Heart right ventricle (tissue), 16 donors: ENCODE measurements at regions of chr11 and their contacts with region 1.

Region 1: DNA sequence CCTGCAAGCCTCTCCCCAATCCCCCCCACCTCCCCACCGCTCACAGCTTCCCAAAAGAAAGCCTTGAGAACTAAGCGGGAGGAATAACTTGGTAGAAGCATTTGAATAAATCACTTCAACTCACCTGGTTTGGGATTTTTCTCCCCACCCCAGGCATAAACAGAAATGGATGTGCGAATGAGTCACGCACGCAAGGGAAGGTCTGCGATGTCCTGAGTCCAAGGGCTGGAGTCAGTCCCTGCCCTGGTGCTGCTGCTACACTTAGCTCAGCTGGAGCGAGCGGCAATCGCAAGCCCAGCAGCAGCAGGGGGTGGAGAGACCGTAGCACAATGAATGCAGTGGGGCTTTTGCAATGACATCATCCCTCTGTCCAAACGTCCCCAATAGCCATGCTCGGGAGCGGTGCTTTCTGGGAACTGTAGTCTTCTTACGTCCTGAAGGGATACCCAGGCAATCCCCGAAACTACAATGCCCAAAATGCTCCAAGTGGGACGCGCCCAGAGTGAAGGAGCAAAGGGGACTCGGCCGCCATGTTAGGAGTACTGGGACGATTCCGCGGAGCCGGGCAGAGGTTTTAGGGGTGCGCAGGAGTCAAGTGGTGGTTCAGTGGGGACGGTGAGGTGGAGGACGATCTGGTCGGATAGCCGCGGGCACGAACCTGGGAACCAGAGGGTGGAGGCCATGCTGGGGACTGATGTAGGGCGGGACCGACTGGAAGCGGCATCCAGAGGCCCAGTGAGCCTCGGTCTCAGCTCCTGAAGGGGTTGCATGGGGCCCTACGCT is at the start of gene RAB30:
- DNase-seq: peak; percentile 87 to 99
- ATAC-seq: peak; percentile 97 to 99 (median 98)
- H3K4me3 ChIP-seq: peak within 1 kb of the TSS; percentile 60 to 89 (median 74)
- H3K27ac ChIP-seq: peak within 1 kb of the TSS; percentile 71 to 95 (median 92)
- H3K4me1 ChIP-seq: peaks cover 2 to 65% (median 48%) of the 10 kb centered on the region in 9 donors
- H3K27me3 ChIP-seq: peaks cover 0 to 12% (median 0%) of the 10 kb centered on the region in 7 donors
- CTCF ChIP-seq: no peak
- total RNA-seq, gene RAB30: 20.2 to 29.4 (median 22.0) TPM

Region 2: DNA sequence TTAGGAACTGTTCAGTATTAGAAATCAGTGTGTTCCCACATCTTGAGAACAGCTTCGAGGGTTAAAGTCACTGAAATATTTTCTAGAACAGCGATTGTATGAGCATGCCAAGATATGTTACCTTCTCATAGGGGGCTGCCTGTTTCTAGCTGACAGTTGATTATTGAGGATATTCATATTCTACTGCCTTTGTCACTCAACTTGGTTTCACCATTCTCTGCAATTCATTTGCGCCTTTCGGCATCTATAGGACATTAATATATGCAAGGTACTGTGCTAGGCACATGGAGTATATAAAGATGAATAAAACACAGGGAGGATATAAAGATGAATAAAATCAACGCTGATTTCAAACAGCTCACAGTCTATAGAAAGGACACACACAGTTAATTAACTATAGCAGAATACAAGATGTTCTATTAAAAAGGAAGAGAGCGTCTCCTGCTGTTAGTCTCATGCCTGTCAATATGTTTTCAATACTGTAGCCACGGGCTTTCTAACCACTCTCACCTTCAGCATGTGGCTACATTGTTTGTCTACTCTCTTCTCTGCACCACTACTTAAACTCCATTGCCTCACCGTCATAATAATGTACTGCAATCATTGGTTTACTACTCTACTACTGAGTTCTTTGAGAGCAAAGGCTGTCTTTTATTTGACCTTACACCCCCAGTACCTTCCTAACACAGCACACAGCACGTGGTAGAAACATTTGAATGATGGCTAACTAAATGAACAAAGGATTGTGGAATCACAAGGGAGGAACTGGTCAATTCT is 81.9 kb before region 1 on chr11:
- intact Hi-C with region 1: loop called in 4 of 10 experiments (anchors 5 kb)
- DNase-seq: no peak
- ATAC-seq: no peak
- H3K4me3 ChIP-seq: no peak overlapping the region
- H3K27ac ChIP-seq: peak overlapping the region in 3 of 10 donors; percentile 10 to 54 (median 32)
- H3K4me1 ChIP-seq: peaks cover 0 to 66% (median 31%) of the 10 kb centered on the region in 9 donors
- H3K27me3 ChIP-seq: no peaks in the 10 kb centered on the region
- CTCF ChIP-seq: no peak

Region 3: DNA sequence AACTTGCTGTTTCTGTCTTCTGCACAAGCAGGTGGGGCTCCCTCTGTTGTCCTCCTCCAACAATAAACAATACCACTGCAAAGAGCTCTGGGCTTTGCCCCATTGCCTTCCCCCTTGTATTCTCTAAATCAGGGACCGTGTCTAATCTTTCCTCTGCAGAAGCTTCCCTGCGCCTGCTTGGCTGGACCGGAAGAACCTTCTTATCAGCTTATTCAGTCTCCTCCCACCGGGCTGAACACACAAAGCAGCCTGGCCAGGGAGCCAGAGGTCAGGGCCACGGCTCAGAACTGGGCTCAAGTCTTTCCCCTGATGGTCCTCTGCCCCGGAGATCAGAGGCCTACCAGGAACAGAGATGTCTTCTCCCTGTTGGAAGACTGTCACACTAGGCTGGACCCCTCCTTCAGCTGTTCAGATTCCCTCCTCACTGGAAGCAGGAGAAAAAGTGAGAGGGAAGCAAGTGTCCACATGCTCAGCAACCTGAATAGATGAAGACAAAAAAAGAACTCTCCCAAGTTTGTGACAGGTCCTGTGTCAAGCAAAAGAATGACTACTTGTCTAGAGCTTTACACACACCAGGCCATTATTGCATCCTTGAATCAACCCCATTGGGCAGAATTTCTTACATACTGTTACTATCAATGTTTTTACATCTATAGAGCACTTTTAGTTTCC is 63.7 kb before region 1 on chr11:
- intact Hi-C with region 1: loop called in 1 of 10 experiments (anchors 5 kb)
- DNase-seq: peak; percentile 70 to 73
- ATAC-seq: peak; percentile 81 to 94 (median 91)
- H3K4me3 ChIP-seq: no peak overlapping the region
- H3K27ac ChIP-seq: peak overlapping the region in 9 of 10 donors; percentile 19 to 84 (median 61)
- H3K4me1 ChIP-seq: peaks cover 20 to 70% (median 50%) of the 10 kb centered on the region in 9 donors
- H3K27me3 ChIP-seq: no peaks in the 10 kb centered on the region
- CTCF ChIP-seq: peak in 3 of 9 donors; percentile 7 to 17 (median 14)

Region 4: GRCh38 chr11:83156150-83156995 is 84.6 kb after region 1 on chr11:
- intact Hi-C with region 1: loop called in 9 of 10 experiments (anchors 1 to 10 kb)
- DNase-seq: peak; percentile 98 to 99
- ATAC-seq: peak; percentile 94 to 98 (median 96)
- H3K4me3 ChIP-seq: peak overlapping the region; percentile 36 to 99 (median 84)
- H3K27ac ChIP-seq: peak overlapping the region; percentile 66 to 100 (median 94)
- H3K4me1 ChIP-seq: peaks cover 0 to 29% (median 27%) of the 10 kb centered on the region in 9 donors
- H3K27me3 ChIP-seq: no peaks in the 10 kb centered on the region
- CTCF ChIP-seq: no peak

Region 5: DNA sequence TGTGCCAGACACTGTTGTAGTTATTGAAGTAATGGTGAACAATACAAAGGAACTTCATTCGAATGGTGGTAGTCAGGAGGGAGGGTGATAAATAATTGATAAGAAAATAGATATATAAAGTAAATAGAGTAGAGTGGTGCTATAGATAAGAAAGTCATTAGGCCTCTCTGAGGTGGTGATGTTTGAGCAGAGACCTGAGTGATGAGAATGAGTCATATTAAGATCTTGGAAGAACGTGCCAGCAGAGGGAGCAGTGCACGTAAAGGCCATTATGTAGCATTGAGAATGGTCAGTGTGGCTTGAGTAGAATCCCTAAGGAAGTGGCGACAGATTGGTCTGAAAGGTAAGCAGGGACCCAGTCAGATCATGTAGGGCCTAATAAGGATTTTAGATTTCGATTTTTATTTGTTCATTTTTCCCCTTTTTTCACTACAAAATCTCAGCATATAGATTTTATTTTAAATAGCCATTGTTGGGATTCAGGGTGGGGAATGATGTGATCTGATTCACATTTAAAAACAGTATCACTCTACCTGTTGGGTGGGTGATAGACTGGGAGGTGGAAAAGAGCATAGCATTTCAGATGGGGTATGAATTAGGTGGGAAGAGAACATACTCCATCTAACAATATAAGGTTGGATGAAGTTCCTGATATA is 169.7 kb after region 1 on chr11:
- intact Hi-C with region 1: no loop called
- DNase-seq: peak in 1 of 2 donors; percentile 19
- ATAC-seq: peak in 4 of 8 donors; percentile 62 to 85 (median 74)
- H3K4me3 ChIP-seq: no peak overlapping the region
- H3K27ac ChIP-seq: no peak overlapping the region
- H3K4me1 ChIP-seq: peaks cover 0 to 3% (median 0%) of the 10 kb centered on the region in 9 donors
- H3K27me3 ChIP-seq: no peaks in the 10 kb centered on the region
- CTCF ChIP-seq: peak in 8 of 9 donors; percentile 16 to 65 (median 58)

Region 6: GRCh38 chr11:83285771-83286528 is 214.2 kb after region 1 on chr11 and contains the start of gene CCDC90B:
- intact Hi-C with region 1: loop called in 1 of 10 experiments (anchors 10 kb)
- DNase-seq: peak; percentile 91 to 97
- ATAC-seq: peak; percentile 97 to 99 (median 98)
- H3K4me3 ChIP-seq: peak within 1 kb of the TSS; percentile 56 to 90 (median 80)
- H3K27ac ChIP-seq: peak within 1 kb of the TSS; percentile 87 to 99 (median 96)
- H3K4me1 ChIP-seq: peaks cover 0 to 42% (median 35%) of the 10 kb centered on the region in 9 donors
- H3K27me3 ChIP-seq: no peaks in the 10 kb centered on the region
- CTCF ChIP-seq: peak in 4 of 9 donors; percentile 38 to 56 (median 47)
- total RNA-seq, gene CCDC90B: 22.3 to 34.3 (median 28.2) TPM

Region 7: DNA sequence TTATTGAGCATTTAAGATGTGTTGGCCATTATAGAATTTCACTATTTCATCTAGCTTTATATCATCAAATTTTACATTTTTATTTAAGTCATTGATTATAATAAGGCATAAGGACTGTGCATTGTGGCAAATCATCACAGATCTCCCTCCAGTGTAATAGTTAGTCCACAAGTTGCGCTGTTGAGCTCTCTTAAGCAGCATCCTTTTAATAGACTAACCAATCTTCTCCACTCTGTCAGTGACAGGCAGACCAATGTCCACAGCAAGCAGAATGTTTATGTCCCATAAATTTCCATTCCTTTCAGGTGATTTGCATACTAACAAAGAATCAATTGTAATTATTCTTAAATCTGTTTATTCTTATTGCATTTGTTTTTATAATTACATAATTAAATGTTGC is 809.7 kb after region 1 on chr11:
- intact Hi-C with region 1: no loop called
- DNase-seq: no peak
- ATAC-seq: no peak
- H3K4me3 ChIP-seq: no peak overlapping the region
- H3K27ac ChIP-seq: no peak overlapping the region
- H3K4me1 ChIP-seq: no peaks in the 10 kb centered on the region
- H3K27me3 ChIP-seq: no peaks in the 10 kb centered on the region
- CTCF ChIP-seq: no peak